Left ventricle myocardium inferior (tissue), 1 donor: ENCODE measurements at regions of chr10 and their contacts with region 1.

Region 1: DNA sequence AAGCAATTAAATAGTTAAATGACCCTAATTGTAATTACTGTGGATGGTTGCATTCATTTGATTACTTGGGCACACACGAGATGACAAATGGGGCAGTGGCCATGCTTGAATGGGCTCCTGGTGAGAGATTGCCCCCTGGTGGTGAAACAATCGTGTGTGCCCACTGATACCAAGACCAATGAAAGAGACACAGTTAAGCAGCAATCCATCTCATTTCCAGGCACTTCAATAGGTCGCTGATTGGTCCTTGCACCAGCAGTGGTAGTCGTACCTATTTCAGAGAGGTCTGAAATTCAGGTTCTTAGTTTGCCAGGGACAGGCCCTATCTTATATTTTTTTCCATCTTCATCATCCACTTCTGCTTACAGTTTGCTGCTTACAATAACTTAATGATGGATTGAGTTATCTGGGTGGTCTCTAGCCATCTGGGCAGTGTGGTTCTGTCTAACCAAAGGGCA is 8.3 kb downstream of the PCBD1 start:
- DNase-seq: peak; percentile 62
- H3K4me3 ChIP-seq: no peak overlapping the region
- H3K27ac ChIP-seq: no peak overlapping the region
- H3K4me1 ChIP-seq: peaks cover 8% of the 10 kb centered on the region
- H3K27me3 ChIP-seq: no peaks in the 10 kb centered on the region
- CTCF ChIP-seq: peak; percentile 95

Region 2: GRCh38 chr10:70693619-70694335 is 186.3 kb before region 1 on chr10:
- intact Hi-C with region 1: no loop called
- DNase-seq: peak; percentile 47
- H3K4me3 ChIP-seq: no peak overlapping the region
- H3K27ac ChIP-seq: peak overlapping the region; percentile 28
- H3K4me1 ChIP-seq: peaks cover 6% of the 10 kb centered on the region
- H3K27me3 ChIP-seq: no peaks in the 10 kb centered on the region
- CTCF ChIP-seq: no peak

Region 3: GRCh38 chr10:70815504-70816219 is 64.4 kb before region 1 on chr10 and contains the start of gene SGPL1:
- intact Hi-C with region 1: loop called (anchors 5 kb)
- DNase-seq: peak; percentile 88
- H3K4me3 ChIP-seq: peak within 1 kb of the TSS; percentile 77
- H3K27ac ChIP-seq: peak within 1 kb of the TSS; percentile 92
- H3K4me1 ChIP-seq: peaks cover 24% of the 10 kb centered on the region
- H3K27me3 ChIP-seq: no peaks in the 10 kb centered on the region
- CTCF ChIP-seq: peak; percentile 99
- total RNA-seq, gene SGPL1: 8.2 TPM

Region 4: GRCh38 chr10:71343392-71343773 is 463.3 kb after region 1 on chr10:
- intact Hi-C with region 1: no loop called
- DNase-seq: no peak
- H3K4me3 ChIP-seq: no peak overlapping the region
- H3K27ac ChIP-seq: no peak overlapping the region
- H3K4me1 ChIP-seq: no peaks in the 10 kb centered on the region
- H3K27me3 ChIP-seq: no peaks in the 10 kb centered on the region
- CTCF ChIP-seq: no peak